Esophagus muscularis mucosa (tissue), 4 donors: ENCODE measurements at regions of chr2 and their contacts with region 1.

Region 1: DNA sequence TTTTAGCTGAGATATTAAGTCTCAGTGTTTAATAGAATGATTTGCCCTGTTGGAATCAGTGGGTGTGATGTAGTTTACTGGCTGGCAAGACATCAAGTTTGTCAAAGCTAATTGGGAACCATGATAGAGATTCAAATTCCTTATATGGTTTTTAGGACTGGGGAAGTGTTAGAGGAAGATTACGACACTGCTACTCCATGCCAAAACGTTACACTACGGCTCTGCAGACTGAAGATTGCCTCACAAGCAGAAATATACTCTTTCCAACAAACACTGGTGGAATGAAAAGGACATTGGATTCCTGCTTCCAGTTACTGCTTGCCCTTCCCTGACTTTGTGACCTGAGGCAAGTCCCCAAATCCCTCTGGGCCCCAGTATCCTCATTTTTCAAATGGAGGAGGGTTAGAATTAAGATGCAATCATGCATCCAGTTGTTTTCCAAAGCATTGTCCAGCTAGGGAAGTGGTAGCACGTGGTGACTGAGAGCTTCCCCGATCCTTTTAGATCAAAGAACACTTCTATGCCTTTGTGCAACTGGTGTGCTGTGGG is 147.6 kb downstream of the CDC42EP3 start:
- DNase-seq: no peak
- H3K4me3 ChIP-seq: no peak overlapping the region
- H3K27ac ChIP-seq: peak overlapping the region; percentile 70 to 82 (median 77)
- H3K4me1 ChIP-seq: peaks cover 19 to 68% (median 46%) of the 10 kb centered on the region in 4 donors
- H3K27me3 ChIP-seq: no peaks in the 10 kb centered on the region
- CTCF ChIP-seq: no peak
- EP300 ChIP-seq: no peak
- POLR2A ChIP-seq: no peak

Region 2: DNA sequence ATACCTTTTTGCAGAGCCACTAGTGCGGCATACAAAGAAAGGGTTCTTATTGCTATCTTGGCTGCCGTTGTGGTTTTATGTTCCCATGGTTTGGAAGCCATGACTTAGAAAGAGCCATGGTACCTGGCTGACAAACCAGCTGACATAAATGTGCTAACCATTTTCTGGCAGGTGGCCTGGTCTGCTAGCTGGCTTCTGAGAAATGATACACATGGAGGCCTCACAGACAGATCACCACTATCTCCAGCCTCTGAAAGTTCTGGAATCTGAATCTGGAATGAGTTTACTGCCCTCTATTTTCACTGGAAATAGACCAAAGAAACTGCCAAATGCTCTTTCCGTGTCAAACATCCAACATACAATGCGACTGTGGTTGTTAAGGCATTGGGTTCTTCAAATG is 55.7 kb before region 1 on chr2:
- intact Hi-C with region 1: loop called (anchors 10 kb)
- DNase-seq: no peak
- H3K4me3 ChIP-seq: no peak overlapping the region
- H3K27ac ChIP-seq: no peak overlapping the region
- H3K4me1 ChIP-seq: peaks cover 4 to 32% (median 21%) of the 10 kb centered on the region in 4 donors
- H3K27me3 ChIP-seq: no peaks in the 10 kb centered on the region
- CTCF ChIP-seq: no peak
- EP300 ChIP-seq: no peak
- POLR2A ChIP-seq: no peak